Naive thymus-derived CD8-positive, alpha-beta T cell (primary cell): ENCODE measurements at regions of chr19 and their contacts with region 1.

Region 1: DNA sequence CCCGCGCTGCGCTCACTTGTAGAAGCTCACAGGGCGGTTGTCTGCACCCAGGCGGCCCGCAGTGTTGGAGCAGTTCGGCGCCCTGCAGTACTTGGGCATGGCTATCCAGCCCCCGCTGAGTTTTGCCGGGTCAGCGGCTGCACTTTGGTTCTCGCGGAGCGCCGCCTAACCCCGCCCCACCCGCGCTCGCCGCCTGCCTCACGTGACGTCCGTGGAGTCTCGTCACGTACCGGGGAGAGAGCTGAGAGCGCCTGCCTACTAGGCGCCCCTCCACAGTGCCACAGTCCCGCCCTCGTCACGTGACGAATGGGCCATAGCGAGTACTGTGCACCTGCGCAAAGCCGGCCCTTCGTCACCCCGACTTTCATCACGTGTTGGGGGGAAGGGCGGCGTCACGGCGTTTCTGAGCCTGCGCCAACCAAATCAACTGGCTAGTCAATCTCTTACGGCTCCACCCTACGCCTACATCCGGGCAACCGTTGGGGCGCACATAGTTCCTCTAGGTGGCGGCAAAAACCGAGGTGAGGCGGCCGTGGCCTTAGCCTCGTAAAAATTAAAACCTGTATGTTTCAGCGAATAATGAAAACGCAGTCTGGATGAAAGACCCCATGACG is at the start of gene THAP8:
- DNase-seq: peak; percentile 97 to 100 (median 100)
- ATAC-seq: peak; percentile 83 to 85
- H3K4me3 Mint-ChIP-seq: peak within 1 kb of the TSS; percentile 95 to 100 (median 98)
- H3K27ac Mint-ChIP-seq: peak within 1 kb of the TSS; percentile 92 to 99 (median 98)
- H3K4me1 Mint-ChIP-seq: peaks cover 13 to 33% (median 28%) of the 10 kb centered on the region in 4 donors
- H3K27me3 Mint-ChIP-seq: no peaks in the 10 kb centered on the region
- polyA plus RNA-seq, gene THAP8: 2.4 to 7.2 (median 5.3) TPM

Region 2: DNA sequence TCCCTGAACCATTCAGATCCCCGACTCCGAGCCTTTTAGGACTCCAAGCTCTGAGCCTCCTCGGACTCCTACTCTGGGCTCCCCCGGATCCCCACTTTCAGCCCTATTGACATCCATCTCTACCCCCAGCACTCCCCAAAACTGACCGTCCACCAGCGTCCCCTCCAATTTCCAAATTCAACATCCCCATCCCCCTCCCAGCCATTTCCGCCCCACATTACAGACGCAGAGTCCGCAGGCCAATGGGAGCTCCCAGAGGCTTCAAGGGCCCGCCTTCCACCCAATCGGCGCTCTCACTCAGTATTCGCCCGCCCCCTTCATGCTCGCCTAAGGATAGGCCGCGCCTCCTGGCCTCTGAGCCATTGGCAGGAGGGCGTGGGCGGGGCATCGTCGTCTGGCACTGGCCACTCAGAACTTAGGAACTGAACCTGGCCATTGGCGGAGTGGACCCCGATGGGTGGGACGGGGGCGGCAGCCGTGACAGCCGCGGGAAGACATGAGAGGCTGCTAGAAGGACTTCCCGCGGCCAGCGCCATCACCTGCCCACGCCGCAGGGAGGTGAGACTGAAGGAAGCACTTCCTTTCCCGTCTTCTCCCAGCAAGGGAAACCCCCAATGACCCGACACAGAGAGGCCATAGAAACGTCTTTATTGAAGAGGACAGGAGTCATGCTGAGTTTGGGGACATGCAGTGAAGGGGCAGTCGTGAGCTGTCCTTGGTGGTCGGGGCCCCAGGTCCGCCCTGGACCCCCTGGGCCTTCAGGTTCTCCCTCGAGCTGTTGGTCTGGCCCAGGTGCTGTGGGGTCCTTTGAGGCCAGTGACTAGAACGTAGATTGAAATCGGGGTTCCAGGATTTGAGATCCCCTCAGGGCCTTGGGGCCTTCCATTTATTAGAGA is 39.9 kb before region 1 on chr19 and contains the start of gene ALKBH6:
- POLR2A ChIA-PET with region 1: interaction called, 10 read pairs
- DNase-seq: peak; percentile 93 to 99 (median 98)
- ATAC-seq: peak; percentile 98
- H3K4me3 Mint-ChIP-seq: peak within 1 kb of the TSS; percentile 91 to 99 (median 97)
- H3K27ac Mint-ChIP-seq: peak within 1 kb of the TSS; percentile 95 to 99 (median 98)
- H3K4me1 Mint-ChIP-seq: peaks cover 21 to 48% (median 41%) of the 10 kb centered on the region in 4 donors
- H3K27me3 Mint-ChIP-seq: no peaks in the 10 kb centered on the region
- polyA plus RNA-seq, gene ALKBH6: 18.7 to 25.6 (median 21.9) TPM

Region 3: DNA sequence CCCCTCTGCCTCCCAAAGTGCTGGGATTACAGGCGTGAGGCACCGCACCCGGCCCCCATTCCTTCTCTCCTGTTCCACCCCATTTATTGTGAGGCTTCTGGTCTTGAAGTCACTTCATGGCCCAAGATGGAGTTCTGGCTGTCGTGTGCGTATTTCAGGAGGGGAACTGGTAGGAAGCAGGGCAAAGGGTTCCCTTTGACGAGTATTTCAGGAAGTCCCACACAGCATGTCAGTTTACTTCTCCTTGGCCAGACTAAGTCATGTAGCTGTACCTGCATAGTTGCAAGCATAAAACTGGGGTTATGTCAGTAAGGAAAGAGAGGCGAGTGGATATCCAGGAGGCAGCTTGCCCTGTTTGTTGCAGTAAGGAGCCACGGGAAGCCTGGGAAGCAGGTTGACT is 10.6 kb after region 1 on chr19:
- POLR2A ChIA-PET with region 1: no interaction called
- DNase-seq: no peak
- ATAC-seq: no peak
- H3K4me3 Mint-ChIP-seq: no peak overlapping the region
- H3K27ac Mint-ChIP-seq: no peak overlapping the region
- H3K4me1 Mint-ChIP-seq: no peaks in the 10 kb centered on the region
- H3K27me3 Mint-ChIP-seq: no peaks in the 10 kb centered on the region

Region 4: GRCh38 chr19:36081385-36081784 is 27.2 kb after region 1 on chr19:
- POLR2A ChIA-PET with region 1: no interaction called
- DNase-seq: no peak
- ATAC-seq: no peak
- H3K4me3 Mint-ChIP-seq: no peak overlapping the region
- H3K27ac Mint-ChIP-seq: no peak overlapping the region
- H3K4me1 Mint-ChIP-seq: no peaks in the 10 kb centered on the region
- H3K27me3 Mint-ChIP-seq: no peaks in the 10 kb centered on the region

Region 5: DNA sequence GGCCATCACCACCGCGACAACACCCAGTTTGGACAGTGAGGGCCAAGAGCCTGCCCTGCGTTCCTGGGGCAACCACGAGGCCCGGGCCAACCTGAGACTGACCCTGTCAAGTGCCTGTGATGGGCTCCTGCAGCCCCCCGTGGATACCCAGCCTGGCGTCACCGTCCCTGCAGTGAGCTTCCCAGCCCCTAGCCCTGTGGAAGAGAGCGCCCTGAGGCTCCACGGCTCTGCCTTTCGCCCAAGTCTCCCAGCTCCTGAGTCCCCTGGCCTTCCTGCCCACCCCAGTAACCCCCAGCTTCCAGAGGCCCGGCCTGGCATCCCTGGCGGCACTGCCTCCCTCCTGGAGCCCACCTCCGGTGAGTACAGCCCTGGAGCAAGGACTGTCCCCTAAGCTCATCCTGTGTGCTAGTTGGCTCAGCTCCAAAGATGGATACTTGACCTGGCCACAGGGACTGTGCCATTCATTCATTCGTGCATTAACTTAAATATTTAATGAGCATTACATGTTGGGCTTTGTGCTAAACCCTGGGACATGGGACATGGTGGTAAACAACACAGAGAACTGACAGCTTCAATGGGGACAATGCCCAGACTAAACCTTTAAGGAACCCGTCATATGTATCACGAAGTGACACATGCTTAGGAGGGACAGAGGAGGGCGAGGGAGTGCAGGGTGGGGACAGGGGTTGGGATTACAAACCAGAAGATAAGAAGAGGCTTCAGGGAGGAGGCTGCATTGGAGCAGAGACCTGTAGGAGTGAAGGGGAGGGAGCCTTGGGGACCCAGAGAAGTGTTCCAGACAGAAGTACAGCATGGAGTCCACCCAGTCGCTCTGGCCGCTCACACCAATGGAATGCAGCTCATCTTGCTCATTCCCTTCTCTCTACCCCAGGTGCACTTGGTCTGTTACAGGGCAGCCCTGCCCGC is 49.7 kb after region 1 on chr19:
- POLR2A ChIA-PET with region 1: no interaction called
- DNase-seq: no peak
- ATAC-seq: no peak
- H3K4me3 Mint-ChIP-seq: no peak overlapping the region
- H3K27ac Mint-ChIP-seq: no peak overlapping the region
- H3K4me1 Mint-ChIP-seq: peaks cover 0 to 2% (median 0%) of the 10 kb centered on the region in 4 donors
- H3K27me3 Mint-ChIP-seq: no peaks in the 10 kb centered on the region